ENCODE measurements at regions of chr9 and their contacts with region 1.

Region 1: GRCh38 chr9:14768405-14769229 is 46.1 kb upstream of the CER1 start:
- ATAC-seq: peak in 5 of 8 experiments; percentile 12 to 52 (median 31)
- H3K4me3 ChIP-seq: no peak overlapping the region
- H3K27ac ChIP-seq: no peak overlapping the region
- H3K4me1 ChIP-seq: no peaks in the 10 kb centered on the region

Region 2: DNA sequence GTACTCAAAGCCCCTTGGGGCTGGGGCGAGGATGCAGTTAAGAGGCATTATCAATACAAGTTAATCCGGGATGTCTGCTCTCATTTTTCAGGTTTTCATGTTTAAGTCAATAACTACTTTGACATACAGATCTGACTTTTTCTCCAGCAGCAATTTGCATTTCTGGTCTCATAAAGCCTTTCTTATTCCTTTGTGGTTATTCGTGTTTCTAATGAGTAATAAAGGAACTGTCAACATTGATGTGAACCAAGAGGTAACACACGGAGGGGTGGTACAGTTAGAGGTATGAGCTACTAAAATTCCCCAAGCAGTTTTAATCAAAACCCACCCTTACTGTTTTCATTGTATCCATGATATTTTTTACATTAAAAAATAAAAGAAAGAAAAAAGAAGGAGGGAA is 316.7 kb before region 1 on chr9:
- in situ Hi-C with region 1: loop called in 3 of 9 experiments (anchors 25 kb)
- ATAC-seq: no peak
- H3K4me3 ChIP-seq: no peak overlapping the region
- H3K27ac ChIP-seq: no peak overlapping the region
- H3K4me1 ChIP-seq: no peaks in the 10 kb centered on the region

Region 3: GRCh38 chr9:14535161-14535955 is 233.3 kb before region 1 on chr9:
- in situ Hi-C with region 1: no loop called
- ATAC-seq: no peak
- H3K4me3 ChIP-seq: no peak overlapping the region
- H3K27ac ChIP-seq: no peak overlapping the region
- H3K4me1 ChIP-seq: peaks cover 29% of the 10 kb centered on the region in 2 donors

Region 4: DNA sequence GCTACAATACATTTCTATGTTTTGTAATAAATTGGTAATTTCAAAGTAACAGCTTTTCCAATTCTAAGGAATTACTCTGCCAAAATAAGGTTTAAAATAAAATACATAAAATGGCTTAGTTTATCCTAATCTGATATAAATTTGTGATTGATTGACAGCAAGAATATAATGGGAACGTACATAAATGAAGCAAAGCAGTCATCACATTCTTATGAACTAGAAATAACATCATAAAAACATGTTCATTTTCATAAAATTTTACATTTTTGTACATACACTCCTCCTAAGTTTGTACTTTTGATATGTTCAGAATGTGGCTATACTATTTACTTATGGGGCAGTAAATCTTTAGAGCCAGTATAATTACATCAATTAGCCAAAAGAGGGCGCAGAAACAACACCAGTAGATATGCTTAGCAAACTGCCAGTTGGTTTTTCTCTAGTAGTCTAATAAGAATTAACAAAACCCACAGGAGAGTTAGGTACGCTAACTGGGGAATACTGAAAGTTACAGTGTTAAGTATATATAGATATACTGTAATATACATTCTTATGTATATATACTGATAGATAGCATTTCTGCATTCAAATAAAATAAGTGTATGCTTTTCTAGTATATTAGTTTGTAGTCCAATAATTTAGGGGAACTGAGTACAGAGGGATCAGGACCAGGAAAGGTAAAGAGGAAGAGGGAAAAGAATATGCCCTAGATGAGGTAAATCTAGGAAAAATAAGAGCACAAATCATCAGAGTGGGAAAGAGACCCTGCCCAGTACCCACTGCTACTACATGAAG is 152.2 kb before region 1 on chr9:
- in situ Hi-C with region 1: loop called in 1 of 9 experiments (anchors 25 kb)
- ATAC-seq: peak in 4 of 8 experiments; percentile 37 to 68 (median 52)
- H3K4me3 ChIP-seq: no peak overlapping the region
- H3K27ac ChIP-seq: no peak overlapping the region
- H3K4me1 ChIP-seq: no peaks in the 10 kb centered on the region